H1 (cell line): ENCODE measurements at regions of chr1 and their contacts with region 1.

Region 1: GRCh38 chr1:15430787-15431570 is 7.3 kb upstream of the CTRC start:
- DNase-seq: peak; percentile 69 to 100
- H3K4me3 ChIP-seq: no peak overlapping the region
- H3K27ac ChIP-seq: no peak overlapping the region
- H3K4me1 ChIP-seq: peaks cover 0 to 7% (median 3%) of the 10 kb centered on the region in 4 experiments; a peak in 5 of 7 replicates
- H3K27me3 ChIP-seq: no peaks in the 10 kb centered on the region; a peak in 1 of 7 replicates
- CTCF ChIP-seq: peak; percentile 88 to 99 (median 96)
- EP300 ChIP-seq: no peak
- POLR2A ChIP-seq: no peak
- RAD21 ChIP-seq: peak; percentile 94

Region 2: GRCh38 chr1:15304701-15305467 is 126.1 kb before region 1 on chr1:
- CTCF ChIA-PET with region 1: interaction called, 12 read pairs
- POLR2A ChIA-PET with region 1: no interaction called
- DNase-seq: peak; percentile 17 to 89
- H3K4me3 ChIP-seq: no peak overlapping the region
- H3K27ac ChIP-seq: no peak overlapping the region
- H3K4me1 ChIP-seq: no peaks in the 10 kb centered on the region
- H3K27me3 ChIP-seq: no peaks in the 10 kb centered on the region; a peak in 1 of 7 replicates
- CTCF ChIP-seq: peak; percentile 72 to 86 (median 81)
- EP300 ChIP-seq: no peak
- POLR2A ChIP-seq: no peak
- RAD21 ChIP-seq: peak; percentile 86 to 87

Region 3: GRCh38 chr1:15390667-15391066 is 40.3 kb before region 1 on chr1:
- CTCF ChIA-PET with region 1: interaction called, 12 read pairs
- POLR2A ChIA-PET with region 1: interaction called, 4 read pairs
- DNase-seq: no peak
- H3K4me3 ChIP-seq: no peak overlapping the region
- H3K27ac ChIP-seq: no peak overlapping the region
- H3K4me1 ChIP-seq: peaks cover 11 to 17% (median 15%) of the 10 kb centered on the region in 4 experiments
- H3K27me3 ChIP-seq: peaks cover 2 to 21% (median 13%) of the 10 kb centered on the region in 4 experiments
- CTCF ChIP-seq: peak; percentile 36 to 67 (median 57)
- EP300 ChIP-seq: no peak
- POLR2A ChIP-seq: no peak
- RAD21 ChIP-seq: peak in 1 of 2 experiments; percentile 54; a peak in 2 of 4 replicates

Region 4: DNA sequence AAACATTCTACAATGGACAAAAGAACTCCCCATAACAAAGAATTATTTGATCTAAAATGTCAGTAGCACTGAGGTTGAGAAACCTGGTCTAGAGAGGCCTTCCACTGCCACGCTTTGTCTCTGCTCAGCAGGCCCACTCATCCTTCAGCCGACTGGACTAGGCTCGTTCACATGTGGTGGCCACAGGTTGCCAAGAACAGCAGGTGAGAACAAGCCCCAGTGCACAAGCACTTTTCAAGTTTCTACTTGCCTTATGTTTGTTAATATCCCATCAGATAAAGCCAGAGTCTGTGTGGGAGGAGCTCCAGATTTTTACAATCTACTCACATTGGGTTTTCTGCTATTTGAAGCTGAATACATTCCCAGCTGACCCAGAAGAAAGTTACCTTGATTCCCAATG is 30.4 kb before region 1 on chr1:
- CTCF ChIA-PET with region 1: interaction called, 11 read pairs
- POLR2A ChIA-PET with region 1: no interaction called
- DNase-seq: no peak
- H3K4me3 ChIP-seq: no peak overlapping the region
- H3K27ac ChIP-seq: no peak overlapping the region
- H3K4me1 ChIP-seq: no peaks in the 10 kb centered on the region
- H3K27me3 ChIP-seq: no peaks in the 10 kb centered on the region
- CTCF ChIP-seq: no peak
- EP300 ChIP-seq: no peak
- POLR2A ChIP-seq: no peak
- RAD21 ChIP-seq: no peak

Region 5: GRCh38 chr1:15411593-15412137 is 19.3 kb before region 1 on chr1:
- CTCF ChIA-PET with region 1: interaction called, 15 read pairs
- POLR2A ChIA-PET with region 1: interaction called, 4 read pairs
- DNase-seq: no peak
- H3K4me3 ChIP-seq: no peak overlapping the region
- H3K27ac ChIP-seq: no peak overlapping the region
- H3K4me1 ChIP-seq: peaks cover 0 to 23% (median 4%) of the 10 kb centered on the region in 4 experiments; a peak in 6 of 7 replicates
- H3K27me3 ChIP-seq: peaks cover 0 to 19% (median 14%) of the 10 kb centered on the region in 4 experiments; a peak in 6 of 7 replicates
- CTCF ChIP-seq: no peak
- EP300 ChIP-seq: no peak
- POLR2A ChIP-seq: no peak
- RAD21 ChIP-seq: no peak

Region 6: DNA sequence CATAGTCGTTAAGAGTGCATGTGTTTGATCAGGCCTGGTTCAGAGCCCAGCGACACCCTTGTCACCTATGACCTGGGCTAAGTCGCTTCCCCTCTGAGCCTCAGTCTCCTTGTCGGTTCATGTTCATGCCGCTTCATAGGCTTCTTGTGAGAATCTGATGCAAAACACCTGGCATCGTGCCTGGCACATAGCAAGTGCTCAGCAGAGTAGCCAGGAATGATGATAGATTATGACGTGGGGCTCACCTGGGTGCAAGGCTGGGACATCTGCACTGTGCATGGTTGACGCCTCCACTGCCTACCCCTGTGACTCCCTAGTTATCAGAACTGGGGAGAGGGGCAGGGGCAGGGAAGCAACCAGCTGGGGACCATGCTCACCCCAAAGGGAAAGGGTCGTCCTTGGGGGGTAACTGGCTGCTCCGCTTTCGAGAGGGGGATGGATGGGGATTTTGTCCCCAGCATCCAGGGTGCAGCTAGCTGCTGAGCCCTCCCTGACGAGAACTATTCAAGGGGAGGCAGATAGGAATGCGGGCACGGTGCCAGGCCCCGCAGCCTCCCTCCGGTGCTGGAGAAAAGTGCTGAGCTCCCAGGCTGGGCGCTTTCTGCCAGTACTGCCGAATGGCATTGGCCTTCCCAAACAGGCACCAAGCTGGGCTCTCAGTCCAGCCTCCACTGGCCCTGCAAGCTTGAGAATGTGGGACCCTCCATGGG is 12.0 kb before region 1 on chr1:
- CTCF ChIA-PET with region 1: interaction called, 24 read pairs
- POLR2A ChIA-PET with region 1: no interaction called
- DNase-seq: no peak
- H3K4me3 ChIP-seq: no peak overlapping the region
- H3K27ac ChIP-seq: no peak overlapping the region
- H3K4me1 ChIP-seq: peaks cover 0 to 9% (median 1%) of the 10 kb centered on the region in 4 experiments; a peak in 4 of 7 replicates
- H3K27me3 ChIP-seq: no peaks in the 10 kb centered on the region
- CTCF ChIP-seq: no peak
- EP300 ChIP-seq: no peak
- POLR2A ChIP-seq: no peak
- RAD21 ChIP-seq: no peak

Region 7: DNA sequence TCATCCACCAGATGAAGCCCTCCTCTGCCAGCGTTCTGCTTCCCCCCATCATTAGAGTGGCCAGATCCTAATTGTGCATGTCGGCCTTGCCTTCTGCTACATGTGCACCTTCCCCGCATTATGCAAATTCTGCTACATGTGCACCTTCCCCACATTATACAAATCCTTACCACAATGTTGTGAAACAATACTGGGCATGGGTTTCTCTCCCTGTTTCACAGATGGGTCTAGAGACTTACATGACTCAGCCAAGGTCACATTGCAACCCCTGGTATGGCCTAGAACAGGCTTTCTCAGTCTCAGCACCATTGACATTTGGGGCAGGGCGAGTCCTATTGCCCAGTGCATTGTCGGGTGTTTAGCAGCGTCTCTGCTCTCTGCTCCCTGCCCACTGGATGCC is 24.5 kb after region 1 on chr1:
- CTCF ChIA-PET with region 1: no interaction called
- POLR2A ChIA-PET with region 1: no interaction called
- DNase-seq: no peak
- H3K4me3 ChIP-seq: no peak overlapping the region
- H3K27ac ChIP-seq: no peak overlapping the region
- H3K4me1 ChIP-seq: no peaks in the 10 kb centered on the region
- H3K27me3 ChIP-seq: no peaks in the 10 kb centered on the region
- CTCF ChIP-seq: no peak
- EP300 ChIP-seq: no peak
- POLR2A ChIP-seq: no peak
- RAD21 ChIP-seq: no peak